ENCODE measurements at regions of chr6 and their contacts with region 1.

Region 1: DNA sequence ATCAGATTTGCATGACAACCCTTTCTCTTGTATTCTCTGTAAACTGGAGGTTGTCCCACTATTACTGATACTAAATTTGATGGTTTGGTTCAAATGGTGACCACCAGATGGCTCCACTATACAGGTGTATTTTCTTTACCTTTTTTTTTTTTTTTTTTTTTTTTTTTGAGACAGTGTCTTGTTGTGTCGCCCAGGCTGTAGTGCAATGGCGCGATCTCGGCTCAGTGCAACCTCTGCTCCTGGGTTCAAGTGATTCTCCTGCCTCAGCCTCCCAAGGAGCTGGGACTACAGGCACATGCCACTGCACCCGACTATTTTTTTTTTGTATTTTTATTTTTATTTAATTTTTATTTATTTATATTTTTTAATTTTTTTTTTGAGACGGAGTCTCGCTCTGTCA is 6.6 kb upstream of the WTAP start:
- DNase-seq: peak; percentile 78
- H3K4me3 ChIP-seq: no peak overlapping the region
- H3K27ac ChIP-seq: no peak overlapping the region
- H3K4me1 ChIP-seq: peaks cover 14% of the 10 kb centered on the region
- CTCF ChIP-seq: peak; percentile 74

Region 2: GRCh38 chr6:159682295-159682694 is 38.4 kb before region 1 on chr6:
- CTCF ChIA-PET with region 1: no interaction called
- POLR2A ChIA-PET with region 1: no interaction called
- intact Hi-C with region 1: no loop called
- DNase-seq: no peak
- H3K4me3 ChIP-seq: no peak overlapping the region
- H3K27ac ChIP-seq: no peak overlapping the region
- H3K4me1 ChIP-seq: no peaks in the 10 kb centered on the region
- CTCF ChIP-seq: no peak

Region 3: GRCh38 chr6:159852877-159853276 is 132.2 kb after region 1 on chr6:
- CTCF ChIA-PET with region 1: interaction called, 3 read pairs
- POLR2A ChIA-PET with region 1: no interaction called
- intact Hi-C with region 1: loop called (anchors 1 kb)
- DNase-seq: peak; percentile 58
- H3K4me3 ChIP-seq: no peak overlapping the region
- H3K27ac ChIP-seq: no peak overlapping the region
- H3K4me1 ChIP-seq: no peaks in the 10 kb centered on the region
- CTCF ChIP-seq: peak; percentile 81

Region 4: DNA sequence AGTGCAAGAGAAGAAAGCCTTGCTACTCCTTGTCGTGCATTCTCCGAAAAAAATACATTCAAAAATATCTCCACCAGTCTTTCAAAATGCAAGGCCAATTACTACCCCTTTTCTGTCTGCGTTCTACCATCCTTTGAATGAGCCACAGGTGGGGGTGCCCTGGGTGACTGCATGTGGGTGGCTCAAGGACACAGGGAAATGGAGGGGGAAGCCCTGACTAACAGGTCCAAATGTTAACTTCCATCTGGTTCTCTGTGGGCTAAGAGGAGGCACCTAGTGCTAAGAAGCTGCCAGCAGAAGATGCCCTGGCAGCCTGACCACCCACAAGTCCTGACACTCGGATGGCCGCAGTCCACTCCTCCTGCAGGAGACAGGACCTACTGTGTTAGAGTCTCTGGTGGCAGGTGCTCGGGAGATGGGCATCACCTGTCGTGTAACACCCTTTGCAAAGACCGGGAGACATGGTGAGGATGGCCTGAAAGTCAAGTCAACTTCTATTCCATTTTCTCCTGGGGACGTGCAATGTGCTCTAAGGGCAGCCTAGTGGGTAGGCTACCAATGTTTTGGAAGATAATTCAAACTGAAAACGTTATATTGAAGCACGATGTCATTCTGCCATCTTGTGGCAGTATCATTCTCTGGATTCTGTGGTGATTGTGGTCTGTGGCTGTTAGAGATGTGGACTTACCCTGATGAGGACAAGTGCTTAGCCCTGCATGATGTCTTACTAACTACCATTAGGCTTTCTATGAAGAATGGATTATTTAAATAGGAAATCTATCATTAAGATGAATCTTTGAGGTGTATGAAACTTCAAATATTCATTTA is 220.8 kb after region 1 on chr6:
- CTCF ChIA-PET with region 1: no interaction called
- POLR2A ChIA-PET with region 1: no interaction called
- intact Hi-C with region 1: loop called (anchors 2 kb)
- DNase-seq: peak; percentile 51
- H3K4me3 ChIP-seq: no peak overlapping the region
- H3K27ac ChIP-seq: no peak overlapping the region
- H3K4me1 ChIP-seq: no peaks in the 10 kb centered on the region
- CTCF ChIP-seq: peak; percentile 77

Region 5: GRCh38 chr6:160714731-160715316 is 994.1 kb after region 1 on chr6:
- CTCF ChIA-PET with region 1: no interaction called
- POLR2A ChIA-PET with region 1: no interaction called
- intact Hi-C with region 1: no loop called
- DNase-seq: no peak
- H3K4me3 ChIP-seq: no peak overlapping the region
- H3K27ac ChIP-seq: no peak overlapping the region
- H3K4me1 ChIP-seq: no peaks in the 10 kb centered on the region
- CTCF ChIP-seq: no peak

Measured in OCI-LY7 (cell line).